ENCODE measurements at regions of chr2 and their contacts with region 1.

Region 1: GRCh38 chr2:171160119-171160955 is at the start of gene TLK1:
- DNase-seq: peak; percentile 79 to 90 (median 88)
- ATAC-seq: peak; percentile 89
- H3K4me3 ChIP-seq: peak within 1 kb of the TSS; percentile 93
- H3K4me1 ChIP-seq: peaks cover 21% of the 10 kb centered on the region
- CTCF ChIP-seq: no peak
- total RNA-seq, gene TLK1: 91.6 to 112 (median 109) TPM

Region 2: GRCh38 chr2:171297951-171298350 is 137.6 kb after region 1 on chr2:
- intact Hi-C with region 1: no loop called
- DNase-seq: no peak
- ATAC-seq: no peak
- H3K4me3 ChIP-seq: no peak overlapping the region
- H3K4me1 ChIP-seq: no peaks in the 10 kb centered on the region
- CTCF ChIP-seq: no peak

Region 3: GRCh38 chr2:171416009-171416926 is 255.9 kb after region 1 on chr2:
- intact Hi-C with region 1: loop called in 1 of 2 experiments (anchors 10 kb)
- DNase-seq: peak; percentile 80 to 98 (median 84)
- ATAC-seq: peak; percentile 100
- H3K4me3 ChIP-seq: no peak overlapping the region
- H3K4me1 ChIP-seq: peaks cover 2% of the 10 kb centered on the region
- CTCF ChIP-seq: peak; percentile 81

Region 4: DNA sequence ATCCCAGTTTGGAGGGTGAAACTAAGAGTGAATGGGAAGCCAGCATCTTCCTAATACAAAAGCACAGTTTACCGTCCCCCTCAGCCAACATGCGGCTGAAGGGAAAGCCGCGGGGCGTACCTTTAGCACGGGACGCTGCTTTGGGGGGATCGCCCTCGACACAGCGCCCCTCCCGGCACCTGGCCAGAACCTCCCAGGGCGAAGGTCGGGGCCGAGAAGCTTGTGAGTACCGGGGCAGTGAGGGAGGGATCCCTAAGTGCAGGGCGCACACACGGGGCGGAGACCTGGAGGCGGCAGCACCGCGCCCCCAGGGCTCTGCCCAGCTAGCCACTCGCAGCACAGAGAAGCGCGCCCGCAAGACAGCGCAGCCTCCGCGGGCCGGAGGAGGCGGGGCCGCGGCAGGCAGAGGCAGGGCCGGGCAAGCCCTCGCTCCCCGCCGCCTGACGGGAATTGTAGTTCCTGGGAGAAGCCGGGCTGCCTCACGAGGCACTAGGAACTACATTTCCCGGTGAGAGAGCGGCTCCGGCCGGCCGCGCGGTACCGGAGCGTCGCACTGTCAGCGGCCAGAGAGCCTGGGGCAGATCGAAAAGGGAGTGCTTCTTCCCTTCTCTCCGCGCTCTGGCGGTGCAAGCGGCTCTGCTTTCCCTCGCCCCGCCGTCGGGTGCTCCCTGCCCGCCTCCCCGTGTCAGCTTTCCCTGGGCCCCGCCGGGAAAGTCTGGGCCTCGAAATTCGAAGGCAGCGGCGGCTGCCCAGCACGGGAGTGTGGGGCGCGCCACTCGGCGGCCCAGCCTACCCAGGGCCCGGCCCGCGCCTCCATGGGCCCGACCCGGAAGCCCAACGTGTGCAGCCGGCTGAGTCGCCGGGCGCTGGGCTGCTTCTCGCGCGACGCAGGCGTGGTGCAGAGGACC is 273.7 kb after region 1 on chr2 and contains the starts of genes DCAF17 and METTL8:
- intact Hi-C with region 1: loop called in 1 of 2 experiments (anchors 10 kb)
- DNase-seq: peak; percentile 95 to 97 (median 97)
- ATAC-seq: peak; percentile 95
- H3K4me3 ChIP-seq: peak within 1 kb of the TSS; percentile 41
- H3K4me1 ChIP-seq: peaks cover 15% of the 10 kb centered on the region
- CTCF ChIP-seq: peak; percentile 30
- total RNA-seq, gene DCAF17: 12.0 to 21.5 (median 14.2) TPM
- total RNA-seq, gene METTL8: 15.9 to 44.9 (median 20.7) TPM